ENCODE measurements at regions of chr1 and their contacts with region 1.

Region 1: DNA sequence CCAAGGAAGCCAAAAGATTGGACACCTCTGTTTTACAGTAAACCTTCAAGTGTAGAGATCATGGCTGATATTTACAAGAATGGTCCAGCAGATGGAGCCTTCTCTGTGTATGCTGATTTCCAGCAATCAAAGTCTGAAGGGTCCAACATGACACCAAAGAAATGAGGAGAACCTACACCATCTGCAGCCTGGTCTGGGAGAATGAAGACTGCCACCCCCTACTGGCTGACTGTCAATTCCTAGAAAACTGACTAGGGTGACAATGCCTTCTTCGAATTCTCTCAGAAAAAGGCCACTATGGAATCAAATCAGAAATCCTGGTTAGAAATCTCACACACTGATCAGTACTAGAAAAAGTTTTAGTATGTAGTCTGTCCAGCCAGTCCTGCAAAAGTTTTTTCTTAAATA is 83.3 kb downstream of the CDC42BPA start:
- DNase-seq: peak in 1 of 10 donors; percentile 38

Region 2: DNA sequence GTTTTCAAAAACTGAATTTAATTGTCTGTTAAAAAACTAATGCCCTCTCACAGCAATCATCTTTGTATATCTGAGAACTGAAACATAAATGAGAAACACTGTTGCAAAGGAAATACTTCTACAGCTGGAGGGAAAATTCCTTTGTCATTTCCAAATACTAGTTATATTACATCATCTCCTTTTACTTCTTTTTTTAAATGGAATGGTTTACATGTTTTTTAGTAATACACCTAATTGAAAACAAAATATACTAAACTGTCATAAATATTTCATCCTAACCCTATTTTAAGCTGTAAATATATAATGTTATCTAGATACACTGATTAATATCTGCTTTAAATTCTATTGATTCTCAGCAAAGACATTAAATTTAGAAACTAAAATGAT is 64.2 kb after region 1 on chr1:
- intact Hi-C with region 1: loop called (anchors 10 kb)
- DNase-seq: no peak